ENCODE measurements at regions of chr11 and their contacts with region 1.

Region 1: DNA sequence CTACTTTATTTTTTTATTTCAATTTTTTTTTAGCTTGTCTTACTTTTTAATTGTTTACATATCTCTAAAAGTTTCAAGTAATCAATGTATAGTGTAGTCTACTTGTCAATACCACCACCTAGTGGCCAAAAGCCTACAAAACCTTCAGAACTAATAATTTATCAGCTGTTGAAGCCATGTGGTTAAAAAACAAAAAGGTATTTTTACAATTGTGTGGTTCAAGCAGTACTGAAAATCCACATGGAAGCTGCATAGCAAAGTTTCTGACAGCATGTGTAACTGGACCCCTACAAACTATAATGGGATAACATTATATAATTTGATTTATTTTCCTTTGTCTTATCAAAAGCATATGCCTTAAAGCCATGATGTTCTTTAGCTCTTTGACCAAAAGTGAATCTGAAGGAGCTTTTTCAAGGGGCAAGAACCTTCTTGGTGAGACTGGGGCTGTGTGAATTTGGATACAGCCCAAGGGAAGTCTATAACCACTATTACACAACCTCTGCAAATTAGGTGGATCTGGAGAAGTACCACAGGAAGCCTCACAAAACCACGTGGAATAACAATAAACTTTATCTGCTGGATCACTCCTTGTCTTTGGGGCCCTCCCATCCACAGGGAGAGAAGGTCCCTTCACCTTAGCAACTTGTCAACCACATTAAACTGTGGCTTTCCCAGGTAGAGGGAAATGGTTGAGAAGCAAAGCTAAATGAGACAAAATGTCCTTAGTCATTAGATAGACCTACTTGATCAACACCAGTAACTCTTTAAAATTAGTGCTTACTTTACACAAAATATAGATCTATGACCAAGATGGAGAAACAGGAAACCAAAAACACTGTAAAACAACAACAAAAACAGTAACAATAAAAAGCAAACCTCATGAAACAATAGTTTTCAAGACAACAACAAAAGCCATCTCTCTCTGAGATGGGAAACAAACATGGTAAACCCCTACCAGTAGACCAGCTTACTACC is 9.9 kb downstream of the NARS2 start:
- DNase-seq: no peak
- ATAC-seq: peak; percentile 51

Region 2: DNA sequence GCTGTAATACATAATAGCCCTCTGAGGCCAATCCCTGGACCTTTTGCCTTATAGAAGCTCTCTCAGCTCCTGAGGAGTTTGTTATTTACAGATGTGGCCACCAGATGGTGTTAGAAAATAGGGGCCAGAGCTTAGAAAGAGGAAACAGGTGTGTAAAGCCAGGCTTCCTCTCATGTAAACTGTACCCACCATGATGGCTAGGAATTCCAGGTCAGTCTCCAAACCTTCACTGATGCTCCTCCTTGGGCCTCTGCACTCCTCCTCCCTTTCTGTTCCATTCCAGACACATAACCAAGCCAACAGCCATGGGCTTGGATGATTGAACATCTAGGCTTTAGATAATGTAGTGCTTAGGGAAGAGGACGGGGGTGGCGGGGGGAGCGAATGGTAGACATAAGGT is 336.3 kb before region 1 on chr11:
- intact Hi-C with region 1: loop called (anchors 5 kb)
- DNase-seq: no peak
- ATAC-seq: peak; percentile 60

Region 3: DNA sequence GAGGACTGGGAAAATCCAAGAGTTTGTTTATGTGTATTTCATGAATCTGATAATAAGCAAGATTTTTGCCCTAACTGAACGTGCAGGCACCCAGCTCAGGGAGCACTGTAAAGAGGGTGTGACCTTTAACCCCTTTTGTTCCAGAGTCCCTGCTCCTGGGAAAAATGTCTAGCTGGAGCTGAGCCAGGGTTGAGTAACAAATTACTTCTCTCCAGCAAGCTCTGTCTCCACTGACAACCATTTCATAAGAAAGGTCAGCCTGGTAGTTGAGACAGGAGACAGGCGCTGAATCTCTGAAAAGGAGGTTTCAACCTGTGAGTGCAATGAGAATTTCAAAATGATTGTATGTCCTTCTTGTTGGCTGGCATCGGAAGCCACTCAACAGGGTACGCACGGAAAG is 166.2 kb after region 1 on chr11:
- intact Hi-C with region 1: no loop called
- DNase-seq: no peak
- ATAC-seq: no peak

Measured in left ventricle myocardium superior (tissue), 1 donor.